ENCODE measurements at regions of chr18 and their contacts with region 1.

Region 1: DNA sequence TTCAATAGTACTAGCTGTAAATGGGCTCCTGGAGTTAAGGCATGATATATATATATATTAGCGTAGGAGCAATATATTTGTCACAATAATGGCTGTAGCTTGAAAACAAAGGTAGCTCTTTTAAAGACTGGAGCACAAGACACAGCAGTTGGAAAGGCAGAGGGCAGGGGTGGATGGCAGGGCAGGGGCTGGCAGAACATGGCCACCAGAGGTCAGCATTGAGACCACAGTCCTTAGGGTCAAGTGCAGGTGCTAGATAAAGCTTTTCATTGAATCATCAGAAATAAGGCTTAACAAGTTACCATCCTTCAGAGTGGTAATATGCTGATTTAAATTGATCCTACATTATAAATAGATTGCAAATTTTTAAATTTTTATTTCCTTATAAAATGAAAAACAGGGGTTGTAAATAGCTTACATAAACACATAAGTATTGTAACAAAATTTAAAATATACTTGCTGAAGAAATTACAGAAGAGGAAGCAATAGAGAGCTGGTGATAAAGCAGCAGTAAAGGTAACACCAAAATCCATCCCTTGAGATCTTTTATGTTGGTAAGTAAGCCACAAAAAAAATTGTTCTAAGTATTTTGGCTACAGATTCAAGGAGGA is 161.2 kb upstream of the PIEZO2 start:
- DNase-seq: peak; percentile 39 to 76
- ATAC-seq: peak; percentile 84 to 97 (median 88)
- H3K4me3 ChIP-seq: no peak overlapping the region
- H3K27ac ChIP-seq: no peak overlapping the region
- H3K4me1 ChIP-seq: no peaks in the 10 kb centered on the region
- H3K27me3 ChIP-seq: peaks cover 0 to 2% (median 0%) of the 10 kb centered on the region in 3 donors
- CTCF ChIP-seq: peak; percentile 84

Region 2: DNA sequence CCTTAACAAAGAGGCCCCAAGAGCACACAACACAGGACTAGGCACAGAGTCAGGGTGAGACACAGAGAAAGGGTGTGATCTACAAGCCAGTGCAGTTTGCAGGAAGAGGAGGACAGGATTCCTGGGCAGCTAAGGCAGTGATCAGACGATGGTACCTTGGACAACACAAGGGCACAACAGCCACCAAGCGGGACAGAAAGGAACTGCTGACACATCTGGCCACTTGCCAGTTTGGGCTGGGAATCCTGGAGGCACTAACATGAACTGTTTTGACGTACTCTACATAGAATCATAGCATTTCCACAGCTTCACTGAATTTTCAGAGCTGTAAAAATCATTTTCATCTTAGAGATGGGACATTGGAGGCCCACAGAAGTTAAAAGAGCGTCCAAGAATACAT is 77.3 kb after region 1 on chr18:
- intact Hi-C with region 1: loop called (anchors 2 to 5 kb)
- DNase-seq: peak; percentile 73 to 82
- ATAC-seq: peak; percentile 78 to 98 (median 90)
- H3K4me3 ChIP-seq: no peak overlapping the region
- H3K27ac ChIP-seq: no peak overlapping the region
- H3K4me1 ChIP-seq: no peaks in the 10 kb centered on the region
- H3K27me3 ChIP-seq: no peaks in the 10 kb centered on the region
- CTCF ChIP-seq: peak; percentile 62

Region 3: DNA sequence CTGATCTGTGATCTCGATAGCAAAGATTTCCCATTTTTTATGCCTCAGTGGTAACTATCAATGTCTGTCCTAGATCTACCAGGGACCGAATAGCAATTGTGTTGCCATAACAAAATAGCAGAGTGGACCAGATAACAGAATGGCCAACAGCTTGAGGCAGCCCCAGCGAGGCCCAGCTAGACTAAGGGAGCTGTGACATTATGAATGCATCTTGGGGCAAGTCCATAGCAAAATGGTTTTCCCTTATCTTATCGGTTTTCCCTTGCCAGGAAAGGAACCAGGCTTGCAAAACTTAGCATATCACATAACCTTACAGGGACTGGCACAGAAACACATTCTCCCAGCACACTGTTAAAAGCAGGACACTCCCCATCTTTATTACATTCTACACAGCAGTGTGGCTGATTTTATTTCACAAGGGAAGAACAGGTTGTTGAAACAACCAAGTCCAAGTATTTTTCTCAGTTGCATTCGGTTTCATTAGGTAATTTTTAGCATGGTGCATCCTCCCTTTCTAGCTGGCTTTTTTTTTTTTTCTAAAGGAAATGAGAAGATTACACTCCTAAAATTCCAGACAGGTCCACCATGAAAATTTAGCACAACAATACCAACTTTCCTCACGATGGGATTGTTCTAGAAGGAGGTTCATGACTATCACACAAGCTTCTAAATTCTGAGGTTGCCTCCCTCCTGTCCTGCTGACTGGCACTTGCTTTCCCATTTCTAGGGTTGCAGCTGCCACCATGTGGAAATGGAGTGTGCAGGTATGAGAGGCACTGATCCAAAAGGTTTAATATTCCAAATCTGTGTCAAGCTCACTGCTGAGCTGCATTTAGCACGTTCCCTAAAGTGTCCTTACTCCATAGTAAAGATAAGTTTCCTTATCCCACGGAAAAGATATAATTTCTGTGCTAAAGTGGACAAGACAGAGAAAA is 201.8 kb after region 1 on chr18:
- intact Hi-C with region 1: loop called (anchors 2 to 5 kb)
- DNase-seq: no peak
- ATAC-seq: peak; percentile 81 to 99 (median 97)
- H3K4me3 ChIP-seq: no peak overlapping the region
- H3K27ac ChIP-seq: peak overlapping the region; percentile 48
- H3K4me1 ChIP-seq: peaks cover 16% of the 10 kb centered on the region
- H3K27me3 ChIP-seq: no peaks in the 10 kb centered on the region
- CTCF ChIP-seq: peak; percentile 48

Region 4: GRCh38 chr18:11553098-11553940 is 242.7 kb after region 1 on chr18:
- intact Hi-C with region 1: loop called in 1 of 2 experiments (anchors 5 kb)
- DNase-seq: no peak
- ATAC-seq: peak; percentile 71 to 83 (median 80)
- H3K4me3 ChIP-seq: no peak overlapping the region
- H3K27ac ChIP-seq: no peak overlapping the region
- H3K4me1 ChIP-seq: no peaks in the 10 kb centered on the region
- H3K27me3 ChIP-seq: peaks cover 0 to 11% (median 0%) of the 10 kb centered on the region in 3 donors
- CTCF ChIP-seq: peak; percentile 92